Activated naive CD4-positive, alpha-beta T cell treated with anti-CD3 and anti-CD28 coated beads, Interleukin-2, amount 10 ng/mL, durations not matched to agents 7 days and 5 days (primary cell): ENCODE measurements at regions of chr6 and their contacts with region 1.

Region 1: DNA sequence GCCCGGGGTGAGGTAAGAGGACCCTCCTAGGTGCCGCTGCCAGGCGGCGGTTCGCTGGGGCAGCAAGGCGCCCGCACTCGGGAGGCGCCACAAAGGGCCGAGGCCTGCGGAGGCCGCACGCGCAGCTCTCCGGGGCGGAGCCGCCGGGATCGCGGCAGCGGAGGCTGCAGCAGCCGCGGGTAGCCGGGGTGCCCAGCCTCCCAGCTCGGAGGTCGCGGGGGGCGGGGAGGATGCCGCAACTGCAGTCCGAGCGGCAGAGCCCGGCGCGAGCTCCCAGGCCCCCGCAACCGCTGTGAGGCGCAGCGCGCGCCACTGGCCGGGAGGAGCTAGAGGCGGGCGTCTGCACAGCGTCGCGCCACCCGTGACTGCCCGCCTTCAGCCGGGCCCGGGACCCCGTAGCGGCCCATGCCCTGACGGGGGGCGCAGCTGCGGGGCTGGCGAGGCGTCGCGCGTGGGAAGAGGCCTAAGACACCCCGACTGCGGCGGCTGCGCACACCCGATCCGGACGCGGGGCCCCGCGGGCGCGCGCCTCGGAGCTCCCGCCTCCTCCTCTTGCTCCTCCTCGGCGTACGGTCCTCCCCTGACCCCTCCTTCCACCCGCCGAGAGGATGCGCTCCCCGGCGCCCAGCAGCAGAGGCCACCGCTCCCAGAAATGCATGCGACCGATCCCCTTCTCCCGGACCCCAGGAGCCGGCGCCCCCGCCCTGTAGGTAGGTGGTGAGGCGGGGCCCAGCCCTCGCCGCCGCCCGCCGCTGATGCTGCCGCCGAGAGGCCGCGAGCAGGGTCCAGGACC is at the start of gene NCOA7:
- DNase-seq: peak; percentile 87
- H3K4me3 Mint-ChIP-seq: peak within 1 kb of the TSS; percentile 91
- H3K27ac Mint-ChIP-seq: peak within 1 kb of the TSS; percentile 99
- H3K4me1 Mint-ChIP-seq: peaks cover 55% of the 10 kb centered on the region
- H3K27me3 Mint-ChIP-seq: no peaks in the 10 kb centered on the region

Region 2: DNA sequence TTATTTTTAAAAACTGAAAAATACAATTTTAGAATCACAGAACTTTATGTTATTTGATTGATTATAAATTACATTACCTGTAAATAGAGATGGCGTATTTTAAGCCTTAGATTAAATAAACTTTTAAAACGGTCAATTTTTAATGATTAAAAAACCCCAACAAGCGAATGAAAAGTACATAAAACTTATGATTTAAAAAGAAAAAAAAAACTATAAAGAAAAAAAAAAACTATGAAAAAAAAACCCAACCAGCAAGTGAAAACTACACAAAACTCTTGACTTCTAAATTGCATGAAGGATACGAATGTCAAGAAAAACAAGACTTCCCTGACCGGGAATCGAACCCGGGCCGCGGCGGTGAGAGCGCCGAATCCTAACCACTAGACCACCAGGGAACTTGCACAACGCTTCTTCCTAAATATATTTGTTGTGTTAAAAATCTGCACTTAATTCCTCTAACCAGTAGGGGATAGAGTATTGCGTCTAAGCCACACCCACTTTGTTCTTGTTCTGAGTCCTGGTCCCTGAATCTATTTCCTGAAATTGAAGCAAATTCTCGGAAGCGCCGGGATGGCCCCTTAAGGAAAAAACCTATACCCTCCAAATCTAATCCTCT is 10.5 kb before region 1 on chr6:
- CTCF ChIA-PET with region 1: interaction called, 65 read pairs
- DNase-seq: peak; percentile 87
- H3K4me3 Mint-ChIP-seq: no peak overlapping the region
- H3K27ac Mint-ChIP-seq: no peak overlapping the region
- H3K4me1 Mint-ChIP-seq: peaks cover 16% of the 10 kb centered on the region
- H3K27me3 Mint-ChIP-seq: peaks cover 20% of the 10 kb centered on the region

Region 3: DNA sequence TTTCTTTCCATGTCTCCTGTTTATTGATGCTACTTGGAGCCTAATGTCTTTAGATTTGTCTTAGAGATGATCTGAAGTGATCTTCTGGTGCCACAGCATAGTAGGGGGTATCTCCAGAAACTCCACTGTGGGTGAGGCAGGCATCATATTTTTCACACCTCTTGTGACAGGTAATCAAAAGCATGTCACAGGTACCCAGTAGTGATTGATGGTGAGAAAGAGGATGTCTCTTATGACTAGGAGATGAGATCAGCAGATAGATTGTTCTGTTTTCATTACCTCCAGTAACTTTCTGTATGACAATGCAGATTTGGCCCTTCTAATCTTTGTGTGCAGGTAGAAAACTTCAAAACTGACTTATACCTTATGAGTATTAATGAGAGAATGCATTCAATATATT is 13.7 kb after region 1 on chr6:
- CTCF ChIA-PET with region 1: interaction called, 29 read pairs
- DNase-seq: no peak
- H3K4me3 Mint-ChIP-seq: no peak overlapping the region
- H3K27ac Mint-ChIP-seq: no peak overlapping the region
- H3K4me1 Mint-ChIP-seq: peaks cover 43% of the 10 kb centered on the region
- H3K27me3 Mint-ChIP-seq: no peaks in the 10 kb centered on the region

Region 4: GRCh38 chr6:125829433-125829832 is 38.9 kb after region 1 on chr6:
- CTCF ChIA-PET with region 1: interaction called, 12 read pairs
- DNase-seq: peak; percentile 30
- H3K4me3 Mint-ChIP-seq: no peak overlapping the region
- H3K27ac Mint-ChIP-seq: peak overlapping the region; percentile 84
- H3K4me1 Mint-ChIP-seq: peaks cover 62% of the 10 kb centered on the region
- H3K27me3 Mint-ChIP-seq: no peaks in the 10 kb centered on the region

Region 5: DNA sequence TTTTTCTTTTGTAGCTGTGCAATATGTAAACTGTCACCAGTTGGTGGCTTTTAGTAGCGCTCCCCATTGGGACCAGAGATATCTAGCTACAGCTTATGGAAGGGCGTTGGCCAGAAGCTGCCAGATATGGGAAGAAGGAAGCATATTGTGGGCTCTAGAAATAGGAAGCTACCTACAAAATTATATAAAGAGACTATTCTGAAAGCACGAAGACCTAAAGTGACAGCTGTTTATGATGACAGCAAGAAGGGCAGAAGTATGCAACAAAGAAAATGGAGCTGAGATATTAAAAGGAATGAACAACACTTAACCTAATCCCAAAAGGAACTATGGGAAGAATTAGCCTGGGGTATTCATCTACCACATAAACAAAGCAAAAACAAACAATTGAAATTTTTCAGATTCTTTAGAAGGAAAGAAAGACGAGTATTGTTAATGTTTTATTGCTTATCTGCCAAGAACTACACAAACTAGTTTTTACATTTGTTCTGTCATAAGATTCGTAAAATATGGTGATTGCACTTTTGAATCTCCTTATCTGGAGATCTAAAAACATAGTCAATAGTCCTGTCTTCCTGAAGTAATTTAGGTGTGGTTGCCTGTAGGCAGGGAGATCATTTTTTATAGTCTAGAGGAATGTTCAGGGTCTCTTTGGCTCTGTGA is 81.8 kb after region 1 on chr6:
- CTCF ChIA-PET with region 1: no interaction called
- DNase-seq: no peak
- H3K4me3 Mint-ChIP-seq: no peak overlapping the region
- H3K27ac Mint-ChIP-seq: no peak overlapping the region
- H3K4me1 Mint-ChIP-seq: no peaks in the 10 kb centered on the region
- H3K27me3 Mint-ChIP-seq: no peaks in the 10 kb centered on the region

Region 6: DNA sequence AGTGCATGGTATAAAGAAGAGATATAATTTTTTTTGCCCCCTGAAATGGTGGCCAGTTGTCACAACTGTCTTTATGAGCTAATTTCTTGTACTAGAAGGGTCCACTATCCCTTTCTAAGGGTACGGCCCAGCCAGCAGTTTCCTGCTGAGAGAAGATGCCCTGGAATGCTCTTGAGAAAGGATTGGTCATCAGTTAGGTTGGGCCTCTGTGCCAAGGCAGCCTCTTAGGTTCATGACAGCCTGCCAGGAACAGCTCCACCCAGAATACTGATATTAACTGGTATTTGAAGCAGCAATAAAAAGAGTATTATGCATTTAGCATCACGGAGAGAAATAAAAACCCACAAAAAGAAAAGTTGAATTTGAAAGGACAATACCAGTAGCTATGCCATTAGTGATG is 157.0 kb after region 1 on chr6:
- CTCF ChIA-PET with region 1: interaction called, 140 read pairs
- DNase-seq: no peak
- H3K4me3 Mint-ChIP-seq: no peak overlapping the region
- H3K27ac Mint-ChIP-seq: no peak overlapping the region
- H3K4me1 Mint-ChIP-seq: no peaks in the 10 kb centered on the region
- H3K27me3 Mint-ChIP-seq: peaks cover 15% of the 10 kb centered on the region